H1 (cell line): ENCODE measurements at regions of chr3 and their contacts with region 1.

Region 1: GRCh38 chr3:124826703-124827102 is 60.5 kb downstream of the ITGB5 start:
- DNase-seq: peak in 1 of 2 experiments; percentile 41
- H3K4me3 ChIP-seq: peak overlapping the region in 1 of 4 experiments; percentile 23; a peak in 1 of 8 replicates
- H3K27ac ChIP-seq: peak overlapping the region; percentile 44; the same call in 1 of the 2 replicates
- H3K4me1 ChIP-seq: peaks cover 7 to 27% (median 21%) of the 10 kb centered on the region in 4 experiments
- H3K27me3 ChIP-seq: no peaks in the 10 kb centered on the region
- CTCF ChIP-seq: no peak
- EP300 ChIP-seq: no peak
- POLR2A ChIP-seq: 0 out of 3 replicates have a peak, but pooled peaks of 1 of the 2 experiments have one; percentile 45
- RAD21 ChIP-seq: no peak

Region 2: DNA sequence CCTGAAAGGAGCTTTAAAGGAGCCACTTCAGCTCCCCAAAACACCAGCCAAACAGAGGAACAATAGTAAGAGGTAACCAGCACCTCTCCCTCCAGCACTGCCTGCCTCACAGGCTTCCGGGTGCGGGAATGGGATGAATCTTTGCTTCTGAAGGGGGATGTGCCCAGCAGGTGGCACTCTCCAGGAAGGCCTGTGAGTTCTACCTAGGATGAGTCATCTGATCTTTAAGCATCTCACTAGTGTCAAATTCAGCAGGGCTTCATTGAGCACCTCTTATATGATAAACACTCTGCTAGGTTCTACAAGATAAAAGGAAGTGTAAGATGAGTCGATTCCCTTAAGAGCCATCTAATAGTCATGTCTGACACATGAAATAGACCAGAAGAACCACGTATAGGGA is 333.9 kb before region 1 on chr3:
- CTCF ChIA-PET with region 1: no interaction called
- POLR2A ChIA-PET with region 1: no interaction called
- DNase-seq: peak in 1 of 2 experiments; percentile 49
- H3K4me3 ChIP-seq: no peak overlapping the region
- H3K27ac ChIP-seq: no peak overlapping the region
- H3K4me1 ChIP-seq: no peaks in the 10 kb centered on the region; a peak in 1 of 7 replicates
- H3K27me3 ChIP-seq: no peaks in the 10 kb centered on the region
- CTCF ChIP-seq: peak; percentile 22 to 39 (median 32); a peak in 2 of 4 replicates
- EP300 ChIP-seq: no peak
- POLR2A ChIP-seq: no peak
- RAD21 ChIP-seq: peak in 1 of 2 experiments; percentile 37; a peak in 1 of 4 replicates

Region 3: GRCh38 chr3:124576565-124577493 is 249.9 kb before region 1 on chr3:
- CTCF ChIA-PET with region 1: no interaction called
- POLR2A ChIA-PET with region 1: no interaction called
- DNase-seq: no peak
- H3K4me3 ChIP-seq: no peak overlapping the region
- H3K27ac ChIP-seq: no peak overlapping the region
- H3K4me1 ChIP-seq: no peaks in the 10 kb centered on the region
- H3K27me3 ChIP-seq: 0 out of 7 replicates have a peak, but pooled peaks cover 0 to 2% (median 0%) of the 10 kb centered on the region in 4 experiments
- CTCF ChIP-seq: no peak
- EP300 ChIP-seq: no peak
- POLR2A ChIP-seq: no peak
- RAD21 ChIP-seq: no peak

Region 4: DNA sequence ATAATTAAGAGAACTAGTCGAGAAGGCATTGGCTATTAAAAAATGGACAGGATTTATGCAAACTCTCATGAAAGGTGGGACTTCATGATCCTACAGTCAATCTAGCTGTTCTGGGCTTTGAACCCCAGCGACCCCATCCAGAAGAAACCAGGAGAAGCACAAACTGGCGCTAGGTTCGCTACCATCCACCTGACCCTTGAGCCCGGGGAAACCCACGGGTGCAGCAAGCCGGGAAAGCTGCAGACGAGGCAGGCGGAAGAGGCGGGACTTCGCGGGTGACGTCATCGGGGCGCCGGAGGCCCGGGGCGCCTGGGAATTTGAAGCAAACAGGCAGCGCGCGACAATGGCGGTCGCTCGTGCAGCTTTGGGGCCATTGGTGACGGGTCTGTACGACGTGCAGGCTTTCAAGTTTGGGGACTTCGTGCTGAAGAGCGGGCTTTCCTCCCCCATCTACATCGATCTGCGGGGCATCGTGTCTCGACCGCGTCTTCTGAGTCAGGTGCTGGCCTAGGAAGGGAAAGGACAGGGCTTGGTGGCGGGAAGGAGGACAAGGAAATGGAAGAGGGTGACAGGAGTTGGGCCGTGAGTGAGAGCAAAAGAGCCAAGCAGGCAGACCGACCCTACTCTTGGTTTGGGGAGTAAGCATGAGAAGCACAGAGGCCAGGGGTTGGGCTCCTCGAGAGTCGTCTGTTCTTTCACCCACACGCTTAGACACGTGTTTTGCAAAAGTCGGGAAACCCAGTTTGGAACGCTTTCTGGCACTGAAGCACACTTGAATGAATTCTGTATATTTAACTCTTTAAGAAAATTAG is 96.4 kb before region 1 on chr3 and contains the start of gene UMPS:
- CTCF ChIA-PET with region 1: no interaction called
- POLR2A ChIA-PET with region 1: no interaction called
- DNase-seq: peak in 1 of 2 experiments; percentile 90
- H3K4me3 ChIP-seq: peak within 1 kb of the TSS; percentile 89 to 100 (median 95)
- H3K27ac ChIP-seq: peak within 1 kb of the TSS; percentile 95
- H3K4me1 ChIP-seq: peaks cover 0 to 5% (median 0%) of the 10 kb centered on the region in 4 experiments; a peak in 1 of 7 replicates
- H3K27me3 ChIP-seq: no peaks in the 10 kb centered on the region; a peak in 2 of 7 replicates
- CTCF ChIP-seq: no peak
- EP300 ChIP-seq: no peak
- POLR2A ChIP-seq: peak; percentile 91 to 96
- RAD21 ChIP-seq: no peak; a peak in 1 of 4 replicates
- total RNA-seq, gene UMPS: 55.8 and 59.0 TPM in 2 replicates

Region 5: DNA sequence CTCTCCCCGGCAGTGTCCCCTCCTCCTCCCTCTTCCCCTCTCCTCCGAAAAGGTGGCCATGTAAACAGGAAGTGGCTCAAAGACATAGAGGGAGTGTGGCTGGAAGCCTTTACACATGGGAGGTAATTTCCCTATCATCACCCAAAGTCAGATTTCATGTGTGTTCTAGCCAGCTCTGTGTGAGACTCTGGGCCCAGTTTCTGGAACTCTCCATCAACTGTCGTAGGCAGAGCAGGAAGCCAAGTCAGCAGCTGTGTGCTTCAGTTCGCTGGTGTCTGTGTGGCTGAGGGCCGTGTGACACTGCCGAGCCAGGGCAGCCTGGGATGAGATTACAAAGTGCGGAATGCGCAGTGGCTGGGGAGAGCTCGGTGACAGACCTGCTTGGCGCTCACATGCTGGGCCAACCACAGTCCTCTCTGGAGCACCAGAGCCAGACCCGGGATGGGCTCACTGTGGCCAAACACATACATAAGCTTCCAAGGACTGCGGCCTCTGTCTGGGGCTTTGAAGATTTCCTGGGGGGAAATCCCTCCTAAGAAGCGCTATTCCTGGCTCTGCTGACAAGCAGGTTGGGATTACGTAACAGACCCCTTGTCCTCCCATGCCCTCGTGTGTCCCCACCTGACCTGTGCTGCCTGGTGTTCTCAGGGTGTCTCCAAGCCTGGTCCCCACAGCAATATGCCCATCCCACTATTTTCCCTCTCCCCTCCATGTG is 45.8 kb before region 1 on chr3:
- CTCF ChIA-PET with region 1: interaction called, 13 read pairs
- POLR2A ChIA-PET with region 1: interaction called, 4 read pairs
- DNase-seq: no peak
- H3K4me3 ChIP-seq: no peak overlapping the region
- H3K27ac ChIP-seq: no peak overlapping the region
- H3K4me1 ChIP-seq: peaks cover 0 to 12% (median 6%) of the 10 kb centered on the region in 4 experiments; a peak in 6 of 7 replicates
- H3K27me3 ChIP-seq: no peaks in the 10 kb centered on the region
- CTCF ChIP-seq: no peak
- EP300 ChIP-seq: no peak
- POLR2A ChIP-seq: no peak
- RAD21 ChIP-seq: no peak

Region 6: GRCh38 chr3:124812291-124813265 is 14.1 kb before region 1 on chr3:
- CTCF ChIA-PET with region 1: interaction called, 10 read pairs
- POLR2A ChIA-PET with region 1: interaction called, 5 read pairs
- DNase-seq: no peak
- H3K4me3 ChIP-seq: no peak overlapping the region
- H3K27ac ChIP-seq: no peak overlapping the region
- H3K4me1 ChIP-seq: no peaks in the 10 kb centered on the region; a peak in 1 of 7 replicates
- H3K27me3 ChIP-seq: no peaks in the 10 kb centered on the region
- CTCF ChIP-seq: no peak
- EP300 ChIP-seq: no peak
- POLR2A ChIP-seq: no peak
- RAD21 ChIP-seq: no peak

Region 7: GRCh38 chr3:124845406-124845805 is 18.7 kb after region 1 on chr3:
- CTCF ChIA-PET with region 1: interaction called, 14 read pairs
- POLR2A ChIA-PET with region 1: interaction called, 3 read pairs
- DNase-seq: no peak
- H3K4me3 ChIP-seq: no peak overlapping the region
- H3K27ac ChIP-seq: no peak overlapping the region
- H3K4me1 ChIP-seq: peaks cover 0 to 5% (median 0%) of the 10 kb centered on the region in 4 experiments; a peak in 2 of 7 replicates
- H3K27me3 ChIP-seq: no peaks in the 10 kb centered on the region; a peak in 1 of 7 replicates
- CTCF ChIP-seq: no peak
- EP300 ChIP-seq: no peak
- POLR2A ChIP-seq: no peak
- RAD21 ChIP-seq: no peak

Region 8: GRCh38 chr3:124887177-124887931 is 60.7 kb after region 1 on chr3 and contains the start of gene ITGB5:
- CTCF ChIA-PET with region 1: interaction called, 7 read pairs
- POLR2A ChIA-PET with region 1: interaction called, 19 read pairs
- DNase-seq: peak in 1 of 2 experiments; percentile 87
- H3K4me3 ChIP-seq: peak within 1 kb of the TSS; percentile 54 to 88 (median 68)
- H3K27ac ChIP-seq: peak within 1 kb of the TSS; percentile 52; the same call in 1 of the 2 replicates
- H3K4me1 ChIP-seq: peaks cover 7 to 40% (median 30%) of the 10 kb centered on the region in 4 experiments
- H3K27me3 ChIP-seq: no peaks in the 10 kb centered on the region
- CTCF ChIP-seq: no peak
- EP300 ChIP-seq: no peak
- POLR2A ChIP-seq: peak in 1 of 2 experiments; percentile 70; a peak in 2 of 3 replicates
- RAD21 ChIP-seq: 0 out of 4 replicates have a peak, but pooled peaks of 1 of the 2 experiments have one; percentile 0
- total RNA-seq, gene ITGB5: 251 and 268 TPM in 2 replicates

Region 9: GRCh38 chr3:124941771-124942170 is 115.1 kb after region 1 on chr3:
- CTCF ChIA-PET with region 1: no interaction called
- POLR2A ChIA-PET with region 1: no interaction called
- DNase-seq: no peak
- H3K4me3 ChIP-seq: no peak overlapping the region
- H3K27ac ChIP-seq: no peak overlapping the region
- H3K4me1 ChIP-seq: no peaks in the 10 kb centered on the region
- H3K27me3 ChIP-seq: no peaks in the 10 kb centered on the region
- CTCF ChIP-seq: no peak
- EP300 ChIP-seq: no peak
- POLR2A ChIP-seq: no peak
- RAD21 ChIP-seq: no peak